ENCODE measurements at regions of chr1 and their contacts with region 1.

Region 1: GRCh38 chr1:180482425-180483275 is 19.7 kb downstream of the ACBD6 start:
- DNase-seq: peak; percentile 66
- ATAC-seq: peak; percentile 41
- H3K4me3 ChIP-seq: no peak overlapping the region
- H3K4me3 Mint-ChIP-seq: no peak overlapping the region
- H3K27ac ChIP-seq: no peak overlapping the region
- H3K27ac Mint-ChIP-seq: no peak overlapping the region
- H3K4me1 ChIP-seq: peaks cover 2 to 4% of the 10 kb centered on the region in 2 donors
- H3K4me1 Mint-ChIP-seq: peaks cover 8% of the 10 kb centered on the region
- H3K27me3 ChIP-seq: no peaks in the 10 kb centered on the region
- H3K27me3 Mint-ChIP-seq: no peaks in the 10 kb centered on the region
- CTCF ChIP-seq: peak; percentile 97

Region 2: DNA sequence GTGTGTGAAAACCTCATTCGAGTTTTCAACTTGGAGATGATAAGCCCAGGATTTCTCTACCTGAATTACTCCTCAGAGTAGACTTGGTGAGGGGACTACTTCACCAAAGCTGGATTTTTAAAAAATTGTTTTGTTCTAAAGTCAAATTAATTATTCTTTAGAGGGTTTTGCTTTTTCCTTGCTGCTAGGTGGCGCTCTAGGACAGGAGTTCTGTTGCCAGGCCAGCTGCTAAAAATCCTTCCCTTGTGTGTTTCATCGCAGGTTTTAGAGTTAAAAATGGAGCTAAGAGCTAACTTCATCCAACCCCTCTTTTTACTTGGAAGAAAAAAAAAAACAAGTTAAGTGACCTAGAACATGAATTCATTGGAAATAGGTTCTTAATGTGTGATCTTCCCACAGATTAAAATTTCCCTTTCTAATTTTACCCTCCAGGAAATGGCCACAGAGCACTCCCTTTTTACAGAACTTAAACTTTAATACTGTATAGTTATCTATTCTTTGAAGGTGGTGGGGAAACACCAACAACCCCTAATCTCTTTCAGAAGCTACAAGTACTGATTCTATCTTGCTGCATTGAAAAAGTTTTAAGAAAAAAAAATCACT is 776.2 kb before region 1 on chr1:
- CTCF ChIA-PET with region 1: interaction called, 4 read pairs
- POLR2A ChIA-PET with region 1: no interaction called
- intact Hi-C with region 1: loop called (anchors 2 kb)
- DNase-seq: peak; percentile 44
- ATAC-seq: no peak
- H3K4me3 ChIP-seq: no peak overlapping the region
- H3K4me3 Mint-ChIP-seq: no peak overlapping the region
- H3K27ac ChIP-seq: no peak overlapping the region
- H3K27ac Mint-ChIP-seq: no peak overlapping the region
- H3K4me1 ChIP-seq: no peaks in the 10 kb centered on the region
- H3K4me1 Mint-ChIP-seq: peaks cover 3% of the 10 kb centered on the region
- H3K27me3 ChIP-seq: peaks cover 0 to 3% (median 0%) of the 10 kb centered on the region in 4 experiments
- H3K27me3 Mint-ChIP-seq: peaks cover 25% of the 10 kb centered on the region
- CTCF ChIP-seq: peak; percentile 76

Region 3: GRCh38 chr1:180188091-180188506 is 294.6 kb before region 1 on chr1:
- CTCF ChIA-PET with region 1: interaction called, 7 read pairs
- POLR2A ChIA-PET with region 1: no interaction called
- intact Hi-C with region 1: loop called (anchors 2 kb)
- DNase-seq: no peak
- ATAC-seq: no peak
- H3K4me3 ChIP-seq: no peak overlapping the region
- H3K4me3 Mint-ChIP-seq: no peak overlapping the region
- H3K27ac ChIP-seq: no peak overlapping the region
- H3K27ac Mint-ChIP-seq: no peak overlapping the region
- H3K4me1 ChIP-seq: no peaks in the 10 kb centered on the region
- H3K4me1 Mint-ChIP-seq: no peaks in the 10 kb centered on the region
- H3K27me3 ChIP-seq: no peaks in the 10 kb centered on the region
- H3K27me3 Mint-ChIP-seq: no peaks in the 10 kb centered on the region
- CTCF ChIP-seq: no peak

Region 4: DNA sequence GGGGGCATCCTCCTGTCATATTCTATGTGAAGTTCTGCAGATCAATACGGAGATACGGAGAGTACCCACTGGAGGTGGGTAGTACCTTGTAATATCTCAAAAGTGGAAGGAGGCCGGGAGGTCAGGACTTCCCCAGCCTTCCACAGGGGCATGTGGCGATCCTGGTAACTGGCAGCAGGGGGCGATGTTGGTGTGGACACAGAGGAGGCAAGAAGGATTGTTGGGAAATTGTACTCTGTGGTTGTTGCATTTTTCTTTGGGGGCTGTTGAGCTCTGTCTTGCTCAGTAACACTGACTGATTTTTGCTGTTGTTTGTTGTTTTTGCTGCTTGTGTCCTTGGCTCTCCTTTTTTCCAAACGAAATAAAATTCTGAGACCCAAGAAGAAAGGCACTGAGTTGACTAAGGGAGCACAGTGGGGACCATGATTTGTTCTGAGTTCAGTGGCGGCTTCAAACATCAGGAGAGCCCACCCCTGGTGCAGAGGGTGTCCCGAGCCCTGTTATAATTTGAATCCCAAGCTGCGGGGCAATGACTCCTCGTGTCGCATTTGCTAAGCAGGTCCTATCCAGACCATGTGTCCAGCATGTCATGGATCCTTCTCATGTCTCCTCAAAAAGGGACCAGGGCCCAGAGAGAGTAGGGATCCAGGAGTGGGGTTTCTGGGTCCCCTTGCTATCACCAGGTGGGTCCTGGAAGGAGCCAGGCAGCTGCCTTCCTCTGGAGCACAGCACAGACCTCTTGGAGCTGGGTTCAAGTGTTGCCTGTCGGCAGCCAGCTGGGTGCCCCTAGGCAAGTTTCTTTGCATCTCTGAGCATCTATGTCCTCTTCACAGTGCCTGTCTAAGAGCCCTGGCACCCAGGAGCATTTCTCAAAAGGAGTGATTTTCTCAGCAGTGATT is 229.8 kb before region 1 on chr1:
- CTCF ChIA-PET with region 1: interaction called, 17 read pairs
- POLR2A ChIA-PET with region 1: no interaction called
- intact Hi-C with region 1: no loop called
- DNase-seq: peak; percentile 50
- ATAC-seq: no peak
- H3K4me3 ChIP-seq: no peak overlapping the region
- H3K4me3 Mint-ChIP-seq: no peak overlapping the region
- H3K27ac ChIP-seq: no peak overlapping the region
- H3K27ac Mint-ChIP-seq: no peak overlapping the region
- H3K4me1 ChIP-seq: no peaks in the 10 kb centered on the region
- H3K4me1 Mint-ChIP-seq: no peaks in the 10 kb centered on the region
- H3K27me3 ChIP-seq: peaks cover 0 to 27% (median 0%) of the 10 kb centered on the region in 4 experiments
- H3K27me3 Mint-ChIP-seq: peaks cover 55% of the 10 kb centered on the region
- CTCF ChIP-seq: peak; percentile 62

Region 5: DNA sequence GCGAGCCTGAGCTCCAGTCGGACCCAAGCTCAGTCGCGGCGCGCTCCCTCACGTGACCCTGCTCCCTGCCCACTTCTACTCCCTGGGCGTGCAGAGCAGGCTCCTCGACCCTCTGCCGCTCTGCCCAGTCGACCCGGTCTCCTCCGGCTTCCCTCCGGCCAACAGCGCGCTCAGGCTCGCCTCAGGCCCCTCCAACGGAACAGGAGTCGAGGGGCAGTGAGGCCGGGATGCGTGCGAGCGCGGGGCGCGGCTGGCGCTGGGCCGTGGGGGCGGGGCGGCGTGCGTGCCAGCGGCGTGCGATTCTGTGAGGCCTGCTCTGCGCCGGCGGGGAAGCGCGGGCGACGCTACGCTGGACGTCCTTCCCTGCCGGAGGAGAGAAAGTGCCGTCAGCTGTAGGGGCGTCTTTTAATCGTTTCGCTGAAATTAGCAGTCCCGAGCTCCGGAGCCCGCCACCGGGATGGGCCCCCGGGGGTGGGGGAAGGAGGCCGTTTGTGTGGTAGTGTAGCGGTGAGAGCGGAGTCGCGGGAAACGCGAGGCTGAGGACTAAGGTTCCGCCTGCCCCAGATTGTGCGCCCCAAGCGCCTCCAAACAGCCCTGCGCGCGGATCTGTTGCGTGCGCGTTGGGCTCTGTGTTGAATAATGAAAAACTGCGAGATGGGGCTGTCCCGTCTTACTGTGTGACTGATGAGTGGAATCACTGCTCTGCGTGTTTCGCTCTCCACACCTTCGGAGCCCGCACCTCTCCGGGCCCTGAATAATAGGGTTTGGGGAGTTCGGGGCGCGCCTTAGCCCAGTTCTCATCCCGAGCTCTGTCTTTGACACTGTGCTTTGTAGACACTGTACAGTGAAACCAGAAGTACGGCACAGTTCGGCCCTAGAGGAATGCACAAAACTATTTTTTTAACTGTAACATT is 20.0 kb after region 1 on chr1 and contains the start of gene ACBD6:
- CTCF ChIA-PET with region 1: interaction called, 23 read pairs
- POLR2A ChIA-PET with region 1: no interaction called
- intact Hi-C with region 1: no loop called
- DNase-seq: peak; percentile 92
- ATAC-seq: peak; percentile 82
- H3K4me3 ChIP-seq: peak within 1 kb of the TSS; percentile 69 to 97 (median 84)
- H3K4me3 Mint-ChIP-seq: peak within 1 kb of the TSS; percentile 95
- H3K27ac ChIP-seq: peak within 1 kb of the TSS; percentile 74 to 87
- H3K27ac Mint-ChIP-seq: peak within 1 kb of the TSS; percentile 98
- H3K4me1 ChIP-seq: peaks cover 13 to 19% of the 10 kb centered on the region in 2 donors
- H3K4me1 Mint-ChIP-seq: peaks cover 32% of the 10 kb centered on the region
- H3K27me3 ChIP-seq: no peaks in the 10 kb centered on the region
- H3K27me3 Mint-ChIP-seq: no peaks in the 10 kb centered on the region
- CTCF ChIP-seq: no peak
- total RNA-seq, gene ACBD6: 80.9 and 82.8 TPM in 2 replicates

Region 6: DNA sequence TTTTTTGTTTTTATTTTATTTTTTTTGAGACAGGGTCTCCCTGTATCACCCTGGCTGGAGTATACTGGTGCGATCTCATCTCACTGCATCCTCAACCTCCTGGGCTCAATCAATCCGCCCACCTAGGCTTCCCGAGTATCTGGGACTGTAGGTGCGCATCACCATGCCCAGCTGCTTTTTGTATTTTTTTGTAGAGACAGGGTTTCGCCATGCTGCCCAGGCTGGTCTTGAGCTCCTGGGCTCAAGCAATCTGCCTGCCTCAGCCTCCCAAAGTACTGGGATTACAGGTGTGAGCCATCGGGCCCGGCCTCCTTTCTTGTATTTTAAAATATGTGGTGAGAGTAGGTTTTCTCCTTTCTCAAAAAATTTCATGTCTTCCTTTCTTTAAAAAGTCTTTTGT is 271.8 kb after region 1 on chr1:
- CTCF ChIA-PET with region 1: no interaction called
- POLR2A ChIA-PET with region 1: interaction called, 10 read pairs
- intact Hi-C with region 1: no loop called
- DNase-seq: no peak
- ATAC-seq: no peak
- H3K4me3 ChIP-seq: no peak overlapping the region
- H3K4me3 Mint-ChIP-seq: no peak overlapping the region
- H3K27ac ChIP-seq: no peak overlapping the region
- H3K27ac Mint-ChIP-seq: no peak overlapping the region
- H3K4me1 ChIP-seq: no peaks in the 10 kb centered on the region
- H3K4me1 Mint-ChIP-seq: peaks cover 2% of the 10 kb centered on the region
- H3K27me3 ChIP-seq: no peaks in the 10 kb centered on the region
- H3K27me3 Mint-ChIP-seq: no peaks in the 10 kb centered on the region
- CTCF ChIP-seq: no peak

Measured in B cell (primary cell).